Naive thymus-derived CD4-positive, alpha-beta T cell (primary cell): ENCODE measurements at regions of chr11 and their contacts with region 1.

Region 1: DNA sequence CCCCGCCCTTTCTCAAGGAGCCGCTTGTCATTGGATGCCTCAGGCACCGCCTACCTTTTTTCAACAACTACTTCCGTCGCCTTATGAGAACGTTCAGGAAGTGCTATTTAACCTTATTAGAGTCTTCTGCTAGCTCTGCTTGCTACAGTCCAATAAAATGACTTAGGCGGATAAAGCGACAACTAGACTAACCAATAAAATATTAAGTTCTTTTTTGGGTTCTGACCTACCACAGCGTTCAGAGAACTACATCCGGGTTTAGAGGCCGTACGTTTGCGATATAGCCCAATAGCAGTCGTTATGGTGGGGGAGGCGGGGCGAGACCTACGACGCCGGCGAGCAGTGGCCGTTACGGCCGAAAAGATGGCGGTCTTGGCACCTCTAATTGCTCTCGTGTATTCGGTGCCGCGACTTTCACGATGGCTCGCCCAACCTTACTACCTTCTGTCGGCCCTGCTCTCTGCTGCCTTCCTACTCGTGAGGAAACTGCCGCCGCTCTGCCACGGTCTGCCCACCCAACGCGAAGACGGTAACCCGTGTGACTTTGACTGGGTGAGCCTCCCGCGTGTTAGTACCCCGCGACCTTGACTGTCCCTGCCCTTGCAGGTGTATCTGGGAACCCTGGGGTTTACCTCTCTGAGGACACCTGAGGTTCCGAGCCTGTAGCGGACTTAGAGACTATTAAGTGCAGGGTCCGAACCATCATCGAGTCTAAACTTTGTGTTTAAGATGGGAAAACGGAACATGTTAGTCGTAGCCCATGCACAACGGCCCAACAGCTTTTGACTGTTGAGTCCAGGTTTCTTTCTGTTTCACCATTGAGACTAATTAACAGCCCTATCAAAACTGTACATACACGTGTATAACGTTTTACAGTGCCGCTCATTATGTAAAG is at the start of gene TMX2:
- DNase-seq: peak; percentile 73 to 96 (median 91)
- ATAC-seq: peak; percentile 94
- H3K4me3 ChIP-seq: peak within 1 kb of the TSS; percentile 98
- H3K4me3 Mint-ChIP-seq: peak within 1 kb of the TSS; percentile 86 to 99 (median 98)
- H3K27ac ChIP-seq: peak within 1 kb of the TSS; percentile 95
- H3K27ac Mint-ChIP-seq: peak within 1 kb of the TSS; percentile 87 to 99 (median 95)
- H3K4me1 ChIP-seq: peaks cover 25 to 33% of the 10 kb centered on the region in 2 donors
- H3K4me1 Mint-ChIP-seq: peaks cover 14 to 61% (median 52%) of the 10 kb centered on the region in 7 donors
- H3K27me3 ChIP-seq: no peaks in the 10 kb centered on the region
- H3K27me3 Mint-ChIP-seq: no peaks in the 10 kb centered on the region
- total RNA-seq, gene TMX2: 43.0 to 67.3 (median 64.8) TPM

Region 2: DNA sequence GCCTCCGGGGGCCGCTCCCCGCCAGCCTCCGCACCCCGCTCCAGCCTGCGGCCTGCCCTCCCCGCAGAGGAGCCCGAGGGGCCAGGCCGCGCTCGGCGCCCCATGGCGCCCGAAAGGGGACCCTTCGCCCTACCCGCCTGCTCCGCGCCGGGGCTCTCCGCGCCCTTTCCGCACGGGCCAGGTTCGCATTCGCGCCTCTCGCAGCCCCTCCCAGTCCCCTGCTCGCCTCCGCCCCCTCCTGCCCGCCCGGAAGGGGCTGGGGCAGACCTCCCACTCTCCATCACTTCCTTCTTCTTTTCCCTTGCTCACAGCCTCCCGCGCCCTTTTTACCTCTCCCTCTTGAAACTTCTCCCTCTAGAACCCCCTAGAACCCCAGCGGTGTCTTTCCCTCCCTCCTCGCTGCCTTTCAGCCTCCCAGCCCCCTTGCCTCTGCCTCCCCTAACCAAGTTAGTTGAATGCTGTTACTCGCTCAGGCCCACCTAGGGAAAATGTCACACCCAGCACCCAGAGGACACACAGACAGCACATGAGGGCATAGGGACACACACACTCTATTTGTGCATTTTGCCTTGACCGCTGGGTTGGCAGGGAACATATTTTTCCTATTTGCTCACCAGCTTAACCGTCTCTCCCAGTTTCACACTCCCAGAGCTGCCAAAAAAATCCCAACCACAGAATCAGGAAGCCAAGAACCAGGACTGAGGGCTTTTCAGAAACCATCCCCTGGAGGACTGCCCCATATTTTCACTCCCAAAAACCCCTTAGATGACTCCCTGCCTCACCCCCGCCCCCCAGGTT is 285.4 kb before region 1 on chr11 and contains the start of gene SLC43A3:
- CTCF ChIA-PET with region 1: no interaction called
- POLR2A ChIA-PET with region 1: no interaction called
- intact Hi-C with region 1: loop called (anchors 1 kb)
- DNase-seq: peak; percentile 18 to 79 (median 38)
- ATAC-seq: peak; percentile 63
- H3K4me3 ChIP-seq: peak within 1 kb of the TSS; percentile 56
- H3K4me3 Mint-ChIP-seq: peak within 1 kb of the TSS; percentile 83 to 92 (median 89)
- H3K27ac ChIP-seq: peak within 1 kb of the TSS; percentile 62
- H3K27ac Mint-ChIP-seq: peak within 1 kb of the TSS; percentile 52 to 93 (median 82)
- H3K4me1 ChIP-seq: peaks cover 24 to 36% of the 10 kb centered on the region in 2 donors
- H3K4me1 Mint-ChIP-seq: peaks cover 40 to 55% (median 50%) of the 10 kb centered on the region in 7 donors
- H3K27me3 ChIP-seq: no peaks in the 10 kb centered on the region
- H3K27me3 Mint-ChIP-seq: peaks cover 0 to 24% (median 0%) of the 10 kb centered on the region in 5 donors
- total RNA-seq, gene SLC43A3: 10.5 to 67.9 (median 12.2) TPM

Region 3: DNA sequence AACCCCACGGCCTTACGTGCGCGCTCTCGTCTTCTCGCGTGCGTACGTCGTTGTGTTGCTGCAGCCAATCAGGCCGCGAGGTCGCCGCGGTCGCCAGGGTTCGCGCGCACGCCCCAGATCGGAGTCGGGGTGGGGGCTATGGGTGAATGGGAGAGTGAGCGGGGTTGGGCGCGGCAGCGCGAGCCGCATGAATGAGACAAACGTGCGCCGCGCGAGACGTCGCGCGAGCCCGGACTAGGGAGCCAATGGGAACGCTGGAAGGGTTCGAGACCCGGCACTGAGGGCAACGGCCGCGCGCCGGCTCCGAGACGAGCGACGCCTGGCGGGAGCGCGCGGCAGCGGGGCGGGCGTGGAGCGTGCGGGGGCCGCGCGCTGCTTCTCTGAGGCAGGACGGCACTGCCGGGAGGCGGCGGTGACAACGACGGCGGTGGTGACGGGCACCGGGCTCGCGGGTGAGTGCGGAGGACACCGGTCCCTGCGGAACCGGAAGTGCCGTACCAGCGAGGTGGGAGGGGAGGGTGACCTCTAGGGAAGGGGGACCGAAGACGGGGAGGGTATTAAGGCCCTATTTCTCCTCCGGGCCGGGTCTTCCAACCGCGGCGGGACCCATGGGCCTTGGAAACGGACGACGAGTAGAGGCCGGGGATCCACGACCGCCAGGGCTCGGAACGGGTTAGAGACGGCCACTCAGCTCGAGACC is 44.6 kb before region 1 on chr11 and contains the start of gene ZDHHC5:
- CTCF ChIA-PET with region 1: no interaction called
- POLR2A ChIA-PET with region 1: interaction called, 5 read pairs
- intact Hi-C with region 1: loop called (anchors 1 kb)
- DNase-seq: peak; percentile 92 to 100 (median 100)
- ATAC-seq: peak; percentile 90
- H3K4me3 ChIP-seq: peak within 1 kb of the TSS; percentile 87
- H3K4me3 Mint-ChIP-seq: peak within 1 kb of the TSS; percentile 84 to 100 (median 91)
- H3K27ac ChIP-seq: peak within 1 kb of the TSS; percentile 97
- H3K27ac Mint-ChIP-seq: peak within 1 kb of the TSS; percentile 97 to 100 (median 98)
- H3K4me1 ChIP-seq: peaks cover 25 to 28% of the 10 kb centered on the region in 2 donors
- H3K4me1 Mint-ChIP-seq: peaks cover 35 to 62% (median 50%) of the 10 kb centered on the region in 7 donors
- H3K27me3 ChIP-seq: no peaks in the 10 kb centered on the region
- H3K27me3 Mint-ChIP-seq: no peaks in the 10 kb centered on the region
- total RNA-seq, gene ZDHHC5: 51.4 to 82.2 (median 59.1) TPM

Region 4: DNA sequence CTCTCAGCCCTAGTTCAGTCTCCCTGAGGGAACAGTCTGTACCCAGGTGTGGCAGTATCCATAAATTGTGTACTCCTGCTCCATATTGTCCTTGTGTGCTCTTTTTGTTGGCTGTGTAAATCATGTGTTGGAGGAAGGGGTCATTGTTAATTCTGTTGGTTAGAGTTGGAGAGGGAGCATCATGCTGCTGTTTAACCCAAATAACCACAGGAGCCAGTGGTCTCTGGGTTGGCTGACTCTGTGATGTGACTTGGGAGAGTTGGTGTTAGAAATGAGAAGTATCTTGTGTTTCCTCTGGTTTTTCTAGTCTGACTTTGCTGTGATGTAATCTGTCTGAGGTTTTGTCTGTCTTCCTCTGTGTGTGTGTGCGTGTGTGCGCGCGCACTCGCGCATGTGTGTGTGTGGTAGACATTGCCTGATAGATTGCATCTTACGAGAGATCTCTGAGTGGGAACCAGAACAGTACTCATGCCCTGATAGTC is 79.6 kb after region 1 on chr11:
- CTCF ChIA-PET with region 1: no interaction called
- POLR2A ChIA-PET with region 1: no interaction called
- intact Hi-C with region 1: loop called (anchors 1 kb)
- DNase-seq: peak; percentile 69 to 93 (median 90)
- ATAC-seq: peak; percentile 96
- H3K4me3 ChIP-seq: peak overlapping the region; percentile 15
- H3K4me3 Mint-ChIP-seq: peak overlapping the region; percentile 55 to 88 (median 77)
- H3K27ac ChIP-seq: peak overlapping the region; percentile 83
- H3K27ac Mint-ChIP-seq: peak overlapping the region; percentile 90 to 99 (median 99)
- H3K4me1 ChIP-seq: peaks cover 21 to 29% of the 10 kb centered on the region in 2 donors
- H3K4me1 Mint-ChIP-seq: peaks cover 37 to 53% (median 44%) of the 10 kb centered on the region in 7 donors
- H3K27me3 ChIP-seq: no peaks in the 10 kb centered on the region
- H3K27me3 Mint-ChIP-seq: peaks cover 0 to 2% (median 0%) of the 10 kb centered on the region in 5 donors

Region 5: DNA sequence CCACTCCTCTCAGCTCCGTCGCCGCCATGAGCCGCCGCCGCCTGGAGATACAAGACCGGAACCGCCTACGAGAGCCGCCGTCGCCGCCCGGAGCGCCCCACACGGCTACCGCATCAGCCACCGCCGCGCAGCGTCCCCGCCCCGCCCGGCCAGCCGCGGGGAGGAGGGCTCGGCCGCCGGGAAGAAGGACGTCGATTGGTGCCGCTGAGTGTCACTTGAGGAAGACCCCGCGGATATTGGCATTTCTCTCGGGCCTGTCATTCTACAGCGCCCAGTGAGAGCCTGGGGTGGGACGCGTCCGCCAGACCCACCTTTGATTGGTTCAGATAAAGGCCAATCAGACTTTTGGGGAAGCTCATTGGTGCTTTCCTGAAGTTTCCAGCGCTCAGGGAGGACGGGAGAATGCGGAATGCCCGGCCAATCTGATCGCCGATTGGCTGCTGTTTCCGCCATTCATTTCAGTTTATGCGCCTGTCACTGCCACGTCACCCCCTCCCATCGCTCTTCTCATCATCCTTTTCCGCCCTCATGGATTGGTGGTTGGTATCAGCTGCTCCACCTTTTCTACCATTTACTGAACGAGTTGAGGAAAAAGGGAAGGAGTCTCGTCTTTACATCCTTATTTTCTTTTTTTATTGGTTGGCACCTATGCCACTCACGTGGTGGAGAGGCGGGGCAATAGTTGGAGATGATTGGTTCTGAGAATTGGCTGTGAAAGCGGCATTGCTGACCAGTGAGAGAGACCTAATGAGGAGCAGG is 1903.3 kb after region 1 on chr11 and contains the start of gene OSBP:
- CTCF ChIA-PET with region 1: no interaction called
- POLR2A ChIA-PET with region 1: interaction called, 5 read pairs
- intact Hi-C with region 1: loop called (anchors 1 to 5 kb)
- DNase-seq: peak; percentile 86 to 100 (median 99)
- ATAC-seq: peak; percentile 84
- H3K4me3 ChIP-seq: peak within 1 kb of the TSS; percentile 72
- H3K4me3 Mint-ChIP-seq: peak within 1 kb of the TSS; percentile 82 to 99 (median 94)
- H3K27ac ChIP-seq: peak within 1 kb of the TSS; percentile 93
- H3K27ac Mint-ChIP-seq: peak within 1 kb of the TSS; percentile 84 to 98 (median 94)
- H3K4me1 ChIP-seq: peaks cover 26 to 29% of the 10 kb centered on the region in 2 donors
- H3K4me1 Mint-ChIP-seq: peaks cover 35 to 54% (median 41%) of the 10 kb centered on the region in 7 donors
- H3K27me3 ChIP-seq: no peaks in the 10 kb centered on the region
- H3K27me3 Mint-ChIP-seq: no peaks in the 10 kb centered on the region
- total RNA-seq, gene OSBP: 39.8 to 57.6 (median 52.4) TPM